Thyroid gland (tissue), 4 donors: ENCODE measurements at regions of chr13 and their contacts with region 1.

Region 1: DNA sequence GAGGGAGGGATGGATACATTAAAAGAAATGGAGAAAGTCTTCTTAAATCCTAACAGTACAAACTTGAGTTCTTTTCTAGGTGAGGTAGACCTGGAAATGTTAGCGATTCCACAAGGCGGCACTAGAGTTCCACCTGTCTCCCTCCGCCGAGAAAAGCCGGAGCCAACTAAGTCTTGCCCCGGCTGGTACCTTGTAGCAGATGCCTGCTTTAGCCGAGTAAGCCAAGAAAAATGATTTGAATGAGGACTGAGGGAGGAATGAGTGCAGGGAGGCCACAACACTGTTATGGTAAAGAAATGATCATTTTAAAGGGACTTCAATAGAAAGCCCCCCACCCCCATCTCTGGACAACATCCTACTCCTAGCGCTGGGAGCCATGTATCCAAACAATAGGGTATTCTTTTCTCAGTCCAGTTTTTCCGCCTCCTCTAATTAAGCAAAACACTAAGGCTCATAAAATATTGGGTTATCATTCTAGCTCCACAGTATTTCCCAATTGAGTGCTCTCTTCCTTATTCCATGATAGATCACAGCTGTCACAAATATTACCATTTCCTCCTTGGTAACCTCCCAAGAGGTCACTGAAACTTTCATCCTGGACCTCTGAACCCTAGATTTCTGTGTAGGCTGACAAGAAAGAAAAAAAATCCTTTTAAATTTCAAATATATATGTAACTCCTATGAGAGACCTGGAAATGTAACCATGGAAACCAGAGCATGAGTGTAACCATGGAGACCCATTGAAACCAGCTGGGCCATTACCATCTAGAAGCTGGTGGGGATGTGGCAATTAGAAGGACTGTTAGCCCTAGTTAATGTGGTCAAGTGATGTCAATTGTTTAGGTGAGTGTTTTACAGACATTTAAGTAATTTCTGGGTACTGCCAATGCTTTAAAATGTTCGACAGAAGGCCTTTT is 58.3 kb downstream of the GPALPP1 start:
- DNase-seq: peak; percentile 73 to 78
- H3K4me3 ChIP-seq: peak overlapping the region in 2 of 3 donors; percentile 3 to 20
- H3K27ac ChIP-seq: no peak overlapping the region
- H3K4me1 ChIP-seq: peaks cover 0 to 5% of the 10 kb centered on the region in 2 donors
- H3K27me3 ChIP-seq: no peaks in the 10 kb centered on the region
- CTCF ChIP-seq: peak; percentile 59 to 98 (median 90)
- POLR2A ChIP-seq: no peak

Region 2: DNA sequence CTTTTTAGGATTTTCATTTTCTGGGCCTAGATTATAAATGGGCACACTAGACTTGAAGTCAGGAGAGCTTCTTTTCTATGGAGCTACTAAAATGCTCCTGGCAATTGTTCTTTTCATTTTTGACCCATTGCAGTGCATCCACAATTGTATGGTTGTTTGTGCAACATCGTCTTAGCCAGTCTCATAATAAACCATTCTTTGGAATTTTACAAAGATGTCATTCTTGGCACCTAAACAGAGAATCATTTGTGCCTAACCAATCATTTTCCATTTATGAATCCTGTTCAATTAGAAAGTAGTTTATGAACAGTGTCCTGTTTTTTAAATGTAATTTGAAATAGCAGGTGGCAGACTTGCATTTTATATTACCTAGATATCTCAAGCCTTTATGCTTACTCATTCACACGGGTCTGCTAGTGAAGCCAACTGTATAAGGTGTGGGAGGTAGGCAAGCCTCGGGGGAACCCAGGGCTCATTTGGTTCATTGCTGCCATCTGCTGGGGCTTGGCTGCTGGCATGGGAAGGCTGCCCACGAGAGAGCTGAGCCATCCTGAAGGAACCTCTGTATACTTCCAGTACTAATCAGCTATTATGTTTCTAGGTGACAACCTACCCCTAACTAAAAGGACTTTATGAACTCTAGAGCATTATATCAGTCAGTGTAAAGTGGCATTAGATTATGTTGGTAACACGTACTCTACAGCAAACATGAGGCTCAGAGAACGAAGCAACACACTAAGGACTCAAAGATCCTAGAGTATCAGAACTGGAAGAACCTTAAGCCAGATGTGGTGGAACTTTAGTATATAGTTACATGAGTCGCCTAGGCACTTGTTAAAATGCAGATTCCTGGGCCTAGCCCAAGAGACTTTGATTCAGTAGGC is 233.3 kb after region 1 on chr13:
- intact Hi-C with region 1: loop called (anchors 5 kb)
- DNase-seq: peak; percentile 79 to 82
- H3K4me3 ChIP-seq: no peak overlapping the region
- H3K27ac ChIP-seq: no peak overlapping the region
- H3K4me1 ChIP-seq: no peaks in the 10 kb centered on the region
- H3K27me3 ChIP-seq: no peaks in the 10 kb centered on the region
- CTCF ChIP-seq: peak in 4 of 6 experiments; percentile 72 to 89 (median 83)
- POLR2A ChIP-seq: no peak

Region 3: GRCh38 chr13:45306966-45307365 is 259.3 kb after region 1 on chr13:
- intact Hi-C with region 1: loop called (anchors 5 kb)
- DNase-seq: no peak
- H3K4me3 ChIP-seq: no peak overlapping the region
- H3K27ac ChIP-seq: no peak overlapping the region
- H3K4me1 ChIP-seq: peaks cover 9 to 16% of the 10 kb centered on the region in 2 donors
- H3K27me3 ChIP-seq: no peaks in the 10 kb centered on the region
- CTCF ChIP-seq: no peak
- POLR2A ChIP-seq: no peak